ENCODE measurements at regions of chr6 and their contacts with region 1.

Region 1: DNA sequence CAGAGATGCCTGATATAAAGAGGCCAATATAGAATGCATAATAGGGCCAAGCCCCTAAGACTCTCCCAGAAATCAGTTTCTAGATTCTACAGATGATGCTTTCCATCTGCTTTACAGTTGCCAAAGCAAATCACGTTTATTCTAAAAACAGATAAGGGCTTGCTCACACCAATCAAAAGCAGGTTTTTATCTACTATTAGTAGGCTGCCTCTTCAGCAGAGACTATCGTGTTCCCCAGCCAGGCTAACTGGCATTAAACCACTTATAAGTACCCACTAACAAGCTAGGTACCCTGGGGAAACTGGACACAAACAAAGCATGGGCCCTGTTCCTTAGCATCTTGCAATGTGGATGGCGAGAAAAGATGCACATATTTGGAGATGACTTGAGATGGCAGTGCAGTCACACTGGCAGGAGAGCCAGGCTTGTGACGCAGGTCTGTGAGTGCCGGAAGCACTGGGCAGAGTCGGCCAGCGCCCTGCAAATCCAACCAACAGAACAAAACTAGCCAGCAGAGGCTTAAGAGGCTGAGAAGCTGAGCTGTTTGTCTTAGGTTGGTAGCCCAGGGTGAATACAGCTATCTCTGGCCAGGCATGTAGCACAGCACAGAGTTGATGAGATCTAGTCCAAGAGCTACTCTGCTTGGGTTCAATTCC is 73.4 kb downstream of the GFOD1 start:
- DNase-seq: peak; percentile 83 to 96
- H3K4me3 ChIP-seq: no peak overlapping the region
- H3K27ac ChIP-seq: peak overlapping the region; percentile 80 to 95
- H3K4me1 ChIP-seq: peaks cover 0 to 98% (median 69%) of the 10 kb centered on the region in 4 donors
- H3K27me3 ChIP-seq: no peaks in the 10 kb centered on the region
- CTCF ChIP-seq: peak in 1 of 2 experiments; percentile 29

Region 2: GRCh38 chr6:13351271-13351670 is 62.8 kb before region 1 on chr6:
- intact Hi-C with region 1: no loop called
- DNase-seq: no peak
- H3K4me3 ChIP-seq: no peak overlapping the region
- H3K27ac ChIP-seq: no peak overlapping the region
- H3K4me1 ChIP-seq: peaks cover 0 to 28% (median 8%) of the 10 kb centered on the region in 4 donors
- H3K27me3 ChIP-seq: no peaks in the 10 kb centered on the region
- CTCF ChIP-seq: no peak

Region 3: DNA sequence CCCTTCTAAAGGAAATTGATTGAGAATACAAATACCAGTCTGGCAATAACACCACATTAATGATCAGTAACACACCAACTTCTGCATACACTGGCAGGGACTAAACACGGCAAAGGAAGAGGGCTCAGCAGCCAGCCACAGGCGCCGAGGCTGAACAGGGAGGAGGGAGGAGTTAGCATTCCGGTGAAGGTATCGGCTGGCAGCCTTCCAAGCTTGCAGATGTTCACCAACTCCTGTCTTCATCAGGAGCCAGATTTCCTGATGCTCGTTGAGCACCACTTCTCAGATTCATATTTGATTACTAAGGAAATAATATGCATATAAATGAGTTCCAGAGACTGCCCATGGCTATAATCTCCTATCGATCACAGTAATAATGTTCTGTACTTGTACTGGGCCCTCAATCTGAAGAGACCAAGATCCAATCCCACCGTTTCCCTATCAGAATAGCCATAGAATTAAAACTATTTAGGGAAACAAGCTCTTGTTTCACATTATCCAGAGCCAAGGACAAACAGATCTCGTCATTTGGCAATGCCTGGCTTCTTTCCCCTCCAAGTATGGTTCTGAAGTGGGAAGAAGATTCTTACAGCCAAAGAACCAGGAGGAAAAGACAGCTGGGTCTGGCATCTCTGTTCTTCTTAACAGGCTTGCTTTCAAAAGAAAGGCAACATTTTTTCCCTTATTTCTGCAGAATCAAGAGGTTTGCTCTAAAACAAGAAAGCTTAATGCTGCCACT is 31.1 kb after region 1 on chr6:
- intact Hi-C with region 1: loop called (anchors 5 kb)
- DNase-seq: no peak
- H3K4me3 ChIP-seq: peak overlapping the region; percentile 3 to 13
- H3K27ac ChIP-seq: peak overlapping the region; percentile 71 to 89
- H3K4me1 ChIP-seq: peaks cover 0 to 79% (median 50%) of the 10 kb centered on the region in 4 donors
- H3K27me3 ChIP-seq: no peaks in the 10 kb centered on the region
- CTCF ChIP-seq: no peak

Region 4: GRCh38 chr6:13487122-13488014 is 73.3 kb after region 1 on chr6 and contains the start of gene GFOD1:
- intact Hi-C with region 1: loop called (anchors 5 kb)
- DNase-seq: peak; percentile 86 to 94
- H3K4me3 ChIP-seq: peak within 1 kb of the TSS; percentile 91 to 94
- H3K27ac ChIP-seq: peak within 1 kb of the TSS; percentile 86 to 90
- H3K4me1 ChIP-seq: peaks cover 0 to 35% (median 8%) of the 10 kb centered on the region in 4 donors
- H3K27me3 ChIP-seq: no peaks in the 10 kb centered on the region
- CTCF ChIP-seq: no peak

Region 5: GRCh38 chr6:13653296-13653695 is 239.3 kb after region 1 on chr6:
- intact Hi-C with region 1: no loop called
- DNase-seq: no peak
- H3K4me3 ChIP-seq: no peak overlapping the region
- H3K27ac ChIP-seq: no peak overlapping the region
- H3K4me1 ChIP-seq: peaks cover 0 to 15% (median 0%) of the 10 kb centered on the region in 4 donors
- H3K27me3 ChIP-seq: no peaks in the 10 kb centered on the region
- CTCF ChIP-seq: no peak